Esophagus muscularis mucosa (tissue), 4 donors: ENCODE measurements at regions of chr20 and their contacts with region 1.

Region 1: GRCh38 chr20:5950271-5951031 is at the starts of genes MCM8 and TRMT6:
- DNase-seq: peak; percentile 99
- H3K4me3 ChIP-seq: peak within 1 kb of the TSS; percentile 65 to 79 (median 70)
- H3K27ac ChIP-seq: peak within 1 kb of the TSS; percentile 68 to 90 (median 83)
- H3K4me1 ChIP-seq: peaks cover 8 to 32% (median 23%) of the 10 kb centered on the region in 4 donors
- H3K27me3 ChIP-seq: no peaks in the 10 kb centered on the region
- CTCF ChIP-seq: no peak
- EP300 ChIP-seq: no peak
- POLR2A ChIP-seq: no peak
- total RNA-seq, gene MCM8: 4.0 to 5.6 (median 4.4) TPM
- total RNA-seq, gene TRMT6: 9.2 to 13.4 (median 9.7) TPM

Region 2: GRCh38 chr20:5741089-5741488 is 209.4 kb before region 1 on chr20:
- intact Hi-C with region 1: no loop called
- DNase-seq: no peak
- H3K4me3 ChIP-seq: no peak overlapping the region
- H3K27ac ChIP-seq: no peak overlapping the region
- H3K4me1 ChIP-seq: peaks cover 4 to 20% (median 18%) of the 10 kb centered on the region in 4 donors
- H3K27me3 ChIP-seq: no peaks in the 10 kb centered on the region
- CTCF ChIP-seq: no peak
- EP300 ChIP-seq: no peak
- POLR2A ChIP-seq: no peak

Region 3: DNA sequence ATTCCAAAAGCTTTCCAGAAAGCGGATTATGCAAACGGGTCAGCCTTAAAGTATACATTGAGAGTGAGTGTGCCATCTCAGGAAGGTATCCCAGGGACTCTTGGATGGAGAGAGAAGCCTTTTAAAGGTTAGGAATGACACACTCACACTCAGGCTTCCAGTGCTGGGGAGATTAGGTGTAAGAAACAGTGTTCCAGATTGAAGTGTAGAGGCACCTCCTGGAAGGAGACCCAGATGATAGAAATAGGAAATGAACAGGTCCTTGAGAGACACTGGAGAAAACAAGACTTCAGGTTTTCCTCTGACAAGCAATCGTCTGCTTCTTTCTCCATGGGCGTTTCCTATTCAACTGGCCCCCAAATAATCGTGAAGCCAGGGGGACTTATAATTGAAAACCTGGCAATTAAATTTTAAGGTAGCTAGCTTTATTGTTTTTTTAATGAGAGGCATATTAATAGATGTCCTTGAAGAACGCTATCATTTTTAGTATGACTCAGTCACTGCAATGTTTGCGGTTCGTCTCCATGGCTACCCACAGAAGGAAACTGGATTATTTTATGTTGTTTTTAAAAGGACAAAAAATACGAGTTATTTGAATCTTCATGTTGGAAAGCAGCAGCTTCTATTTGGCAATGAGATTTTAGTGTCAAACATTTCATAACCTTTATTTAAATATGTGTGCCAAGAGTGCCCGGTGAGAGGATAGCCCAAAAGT is 85.4 kb before region 1 on chr20:
- intact Hi-C with region 1: no loop called
- DNase-seq: no peak
- H3K4me3 ChIP-seq: no peak overlapping the region
- H3K27ac ChIP-seq: peak overlapping the region in 2 of 4 donors; percentile 13 to 57
- H3K4me1 ChIP-seq: peaks cover 27 to 39% (median 33%) of the 10 kb centered on the region in 4 donors
- H3K27me3 ChIP-seq: no peaks in the 10 kb centered on the region
- CTCF ChIP-seq: no peak
- EP300 ChIP-seq: no peak
- POLR2A ChIP-seq: no peak

Region 4: DNA sequence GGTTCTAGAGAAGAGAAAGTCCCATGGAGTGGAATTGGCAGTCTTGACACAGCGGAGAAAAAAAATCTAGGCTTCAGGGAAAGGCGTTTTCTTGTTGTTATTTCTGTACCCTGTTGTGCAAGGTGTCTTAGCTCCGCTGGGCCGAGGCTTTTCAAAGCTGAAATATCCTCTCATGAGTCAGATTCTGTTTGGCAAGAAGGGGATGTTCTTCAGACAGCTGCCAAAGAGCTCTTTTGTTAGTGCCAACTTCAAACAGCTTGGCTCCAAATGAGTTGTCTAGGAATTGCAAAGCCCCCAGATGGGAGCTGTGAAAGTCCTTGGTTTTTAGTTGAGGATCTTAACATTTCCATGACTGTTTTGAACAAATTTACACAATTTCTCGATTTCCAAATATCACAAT is 57.8 kb after region 1 on chr20:
- intact Hi-C with region 1: loop called (anchors 2 kb)
- DNase-seq: no peak
- H3K4me3 ChIP-seq: peak overlapping the region in 3 of 4 donors; percentile 76 to 94 (median 86)
- H3K27ac ChIP-seq: peak overlapping the region; percentile 48 to 89 (median 62)
- H3K4me1 ChIP-seq: peaks cover 21 to 40% (median 32%) of the 10 kb centered on the region in 4 donors
- H3K27me3 ChIP-seq: no peaks in the 10 kb centered on the region
- CTCF ChIP-seq: no peak
- EP300 ChIP-seq: no peak
- POLR2A ChIP-seq: no peak